T-cell (primary cell): ENCODE measurements at regions of chr3 and their contacts with region 1.

Region 1: GRCh38 chr3:81995329-81995728 is 233.9 kb upstream of the GBE1 start:
- DNase-seq: no peak
- ATAC-seq: no peak
- H3K4me3 ChIP-seq: no peak overlapping the region
- H3K4me3 Mint-ChIP-seq: no peak overlapping the region
- H3K27ac ChIP-seq: no peak overlapping the region
- H3K27ac Mint-ChIP-seq: no peak overlapping the region
- H3K4me1 ChIP-seq: no peaks in the 10 kb centered on the region
- H3K4me1 Mint-ChIP-seq: no peaks in the 10 kb centered on the region
- H3K27me3 ChIP-seq: no peaks in the 10 kb centered on the region
- H3K27me3 Mint-ChIP-seq: no peaks in the 10 kb centered on the region

Region 2: DNA sequence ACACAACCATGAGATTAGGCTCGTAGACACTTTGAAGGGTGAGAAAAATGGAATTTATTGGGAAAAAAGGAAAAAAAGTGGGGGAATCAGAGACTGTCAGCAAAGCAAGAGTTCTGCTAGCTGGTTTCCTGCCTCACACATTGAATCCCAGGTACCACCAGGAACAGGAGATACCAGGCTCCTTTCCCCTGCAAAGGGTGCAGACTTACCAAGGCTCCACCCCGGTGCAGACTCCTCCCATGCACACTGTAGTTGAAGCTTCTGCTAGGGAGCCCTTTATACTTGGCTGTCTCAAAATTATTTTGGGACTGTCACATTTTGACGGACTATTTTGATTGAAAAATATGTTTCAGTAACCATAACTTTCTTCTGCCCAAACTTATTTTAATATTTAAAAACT is 586.0 kb after region 1 on chr3:
- CTCF ChIA-PET with region 1: no interaction called
- POLR2A ChIA-PET with region 1: interaction called in 1 of 2 experiments, 10 read pairs
- DNase-seq: no peak
- ATAC-seq: no peak
- H3K4me3 ChIP-seq: no peak overlapping the region
- H3K4me3 Mint-ChIP-seq: no peak overlapping the region
- H3K27ac ChIP-seq: no peak overlapping the region
- H3K27ac Mint-ChIP-seq: no peak overlapping the region
- H3K4me1 ChIP-seq: no peaks in the 10 kb centered on the region
- H3K4me1 Mint-ChIP-seq: no peaks in the 10 kb centered on the region
- H3K27me3 ChIP-seq: no peaks in the 10 kb centered on the region
- H3K27me3 Mint-ChIP-seq: no peaks in the 10 kb centered on the region